A549 (cell line): ENCODE measurements at regions of chr5 and their contacts with region 1.

Region 1: DNA sequence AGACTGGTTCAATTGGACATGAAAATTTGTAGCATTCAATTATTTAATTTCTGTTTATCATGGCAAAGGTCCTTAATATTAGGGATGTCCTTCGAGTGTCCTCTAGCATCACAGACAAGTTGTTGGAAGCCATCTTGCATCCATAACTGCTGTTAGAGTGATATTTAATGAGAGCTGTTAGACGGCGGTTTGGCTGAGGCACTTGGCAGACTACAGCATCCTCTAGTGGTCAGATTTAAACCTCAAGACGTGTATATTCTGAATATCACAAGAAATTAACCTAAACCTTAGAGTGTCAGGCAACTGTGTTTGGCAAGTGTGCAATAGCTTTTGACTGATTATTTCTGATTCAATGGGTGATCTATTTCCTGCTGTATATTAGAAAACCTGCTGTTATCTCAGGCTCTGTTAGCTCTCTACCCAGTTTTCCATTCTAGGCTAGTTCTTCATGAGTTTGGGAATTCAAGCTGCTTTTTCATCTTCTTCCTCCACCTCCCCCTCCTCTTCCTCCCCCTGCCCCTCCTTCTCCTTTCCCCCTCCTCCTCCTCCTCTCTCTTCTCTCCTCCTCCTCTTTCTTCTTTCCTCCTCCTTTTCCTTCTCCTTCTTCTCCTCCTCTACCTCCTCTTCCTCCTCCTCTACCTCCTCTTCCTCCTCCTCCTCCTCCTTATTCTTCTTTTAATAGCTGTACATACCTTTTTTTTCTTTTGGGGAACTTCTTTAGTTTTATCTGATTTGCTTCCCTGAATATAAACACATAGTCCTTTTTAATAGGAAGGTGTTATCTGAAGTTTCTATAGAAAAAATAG is 8.6 kb downstream of the SPINK1 start:
- DNase-seq: peak; percentile 18 to 69
- ATAC-seq: peak; percentile 89 to 94
- H3K4me3 ChIP-seq: no peak overlapping the region
- H3K27ac ChIP-seq: no peak overlapping the region
- H3K4me1 ChIP-seq: no peaks in the 10 kb centered on the region
- CTCF ChIP-seq: peak; percentile 72
- EP300 ChIP-seq: no peak
- POLR2A ChIP-seq: no peak
- RAD21 ChIP-seq: peak; percentile 67 to 83

Region 2: DNA sequence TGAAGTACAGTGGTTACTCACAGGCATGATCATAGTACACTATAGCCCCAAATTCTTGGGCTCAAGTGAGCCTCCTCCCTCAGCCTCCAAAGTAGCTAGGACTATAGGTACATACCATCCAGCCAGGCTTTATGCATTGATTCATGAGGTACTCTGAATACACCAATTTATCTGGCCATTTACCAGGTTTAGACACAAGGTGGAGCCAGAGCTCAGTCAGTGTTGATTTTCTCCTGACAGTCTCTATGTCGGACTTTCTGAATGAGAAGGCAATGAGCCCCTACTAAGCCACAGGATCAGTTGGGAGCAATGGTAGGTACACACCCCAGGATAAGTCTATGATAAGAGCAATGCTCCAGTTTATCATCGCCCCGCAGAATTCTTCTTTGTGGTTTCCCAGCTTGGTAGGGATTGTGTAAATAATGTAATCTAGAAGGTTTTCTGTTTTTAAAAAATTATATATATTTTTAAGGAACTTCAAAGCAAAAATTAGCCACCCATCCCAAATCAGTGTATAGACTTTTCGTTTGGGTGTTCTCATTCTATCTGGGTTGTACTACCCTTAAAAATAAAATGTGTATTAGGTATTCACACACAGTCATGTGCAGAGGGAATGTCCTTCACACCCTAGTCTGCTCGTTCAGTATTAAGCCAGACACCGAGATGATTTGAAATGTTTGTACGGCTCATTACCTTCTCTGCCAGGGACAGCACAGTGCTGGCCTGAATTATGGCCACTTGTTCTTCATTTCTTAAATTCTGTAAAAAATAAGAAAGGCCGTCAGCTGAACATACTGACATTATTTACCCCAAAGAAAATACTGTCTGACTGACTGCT is 194.6 kb before region 1 on chr5:
- CTCF ChIA-PET with region 1: interaction called, 68 read pairs
- POLR2A ChIA-PET with region 1: no interaction called
- DNase-seq: peak; percentile 40 to 61
- ATAC-seq: peak; percentile 88 to 95
- H3K4me3 ChIP-seq: no peak overlapping the region
- H3K27ac ChIP-seq: no peak overlapping the region
- H3K4me1 ChIP-seq: no peaks in the 10 kb centered on the region
- CTCF ChIP-seq: peak; percentile 70
- EP300 ChIP-seq: no peak
- POLR2A ChIP-seq: no peak
- RAD21 ChIP-seq: peak; percentile 74 to 86

Region 3: DNA sequence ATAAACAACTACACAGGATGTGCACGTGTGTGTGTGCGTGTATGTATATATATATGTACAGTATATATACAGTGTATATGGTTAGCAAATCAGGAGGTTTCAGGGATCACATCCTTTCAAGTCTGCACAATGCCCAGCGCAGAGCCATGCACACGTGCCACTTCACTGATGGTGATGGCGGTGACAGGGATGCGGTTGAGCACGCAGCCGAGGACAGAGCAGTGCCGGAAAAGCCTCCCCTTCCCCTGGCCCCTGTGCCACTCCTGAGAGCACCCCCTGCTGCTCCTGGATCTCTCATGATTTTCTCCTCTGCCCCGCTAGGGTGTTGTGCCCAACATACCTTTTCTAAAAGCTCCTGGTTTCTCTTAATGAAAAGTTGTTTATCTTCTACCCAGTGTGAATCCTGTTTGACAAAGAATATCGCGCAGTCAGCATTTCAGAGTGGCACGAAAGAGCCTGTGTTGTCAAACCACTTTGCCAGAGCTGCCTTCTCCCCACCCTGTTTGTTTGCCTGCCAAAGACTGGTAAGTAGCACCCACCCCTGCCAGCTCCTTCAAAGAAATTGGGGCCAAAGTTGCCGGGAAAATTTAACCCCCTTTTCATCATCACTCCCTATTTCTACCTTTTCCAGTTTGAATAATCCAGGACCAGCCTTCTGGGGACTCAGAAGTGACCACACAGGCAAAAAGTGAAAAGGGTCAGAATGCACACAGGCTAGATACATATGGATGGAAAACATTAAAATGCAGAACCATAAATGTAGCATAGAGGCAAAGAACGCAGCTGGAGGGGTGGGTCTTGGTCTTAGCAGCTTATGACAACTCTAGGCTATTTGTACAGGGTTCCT is 186.8 kb before region 1 on chr5:
- CTCF ChIA-PET with region 1: interaction called, 11 read pairs
- POLR2A ChIA-PET with region 1: no interaction called
- DNase-seq: no peak
- ATAC-seq: no peak
- H3K4me3 ChIP-seq: no peak overlapping the region
- H3K27ac ChIP-seq: no peak overlapping the region
- H3K4me1 ChIP-seq: no peaks in the 10 kb centered on the region
- CTCF ChIP-seq: no peak
- EP300 ChIP-seq: no peak
- POLR2A ChIP-seq: no peak
- RAD21 ChIP-seq: no peak